AG04450 (cell line): ENCODE measurements at regions of chr7 and their contacts with region 1.

Region 1: DNA sequence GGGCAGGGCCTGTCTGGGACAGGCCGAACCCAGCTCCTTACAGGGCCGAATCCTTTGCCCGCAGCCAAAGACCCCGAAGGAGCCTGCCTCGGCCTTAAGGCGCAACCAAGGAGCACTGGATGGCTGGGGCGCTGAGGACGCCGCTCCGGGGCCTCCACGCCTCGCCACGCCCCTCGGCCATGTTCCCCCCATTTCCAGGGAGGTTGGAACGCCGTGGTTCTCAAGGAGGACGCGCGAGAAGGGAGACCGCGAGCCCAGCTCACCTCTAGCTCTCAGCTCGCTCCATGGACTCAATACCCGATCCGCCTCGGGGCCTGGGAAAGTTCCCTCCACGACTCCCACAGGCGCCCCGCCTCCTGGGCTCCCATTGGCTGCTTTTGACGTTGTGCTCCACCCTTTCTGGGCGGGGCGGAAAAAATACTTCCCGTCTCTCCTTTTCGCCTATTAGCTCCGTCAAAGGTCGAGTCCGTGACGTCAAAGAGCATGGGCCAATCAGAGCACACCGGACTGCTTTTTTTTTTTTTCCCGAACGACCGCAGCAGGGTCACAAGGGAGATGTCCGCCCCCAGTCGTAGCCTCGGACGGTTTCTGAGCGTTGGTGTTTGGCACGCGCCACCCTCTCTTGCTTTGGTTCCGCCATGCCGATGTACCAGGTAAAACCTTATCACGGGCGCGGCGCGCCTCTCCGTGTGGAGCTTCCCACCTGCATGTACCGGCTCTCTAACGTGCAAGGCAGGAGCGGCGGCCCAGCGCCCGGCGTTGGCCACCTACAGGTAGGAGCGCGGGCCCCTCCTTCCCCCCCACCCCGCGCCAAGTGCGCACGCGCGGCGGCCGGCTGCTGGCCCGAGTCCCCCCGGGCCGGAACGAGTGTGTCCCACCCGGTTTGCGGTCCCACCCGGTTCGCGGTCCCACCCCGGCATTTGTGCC is 305.7 kb downstream of the TYW1 start:
- DNase-seq: peak; percentile 98
- H3K4me3 ChIP-seq: peak overlapping the region; percentile 85
- H3K27ac ChIP-seq: peak overlapping the region; percentile 96
- H3K27me3 ChIP-seq: no peaks in the 10 kb centered on the region
- CTCF ChIP-seq: peak; percentile 49

Region 2: DNA sequence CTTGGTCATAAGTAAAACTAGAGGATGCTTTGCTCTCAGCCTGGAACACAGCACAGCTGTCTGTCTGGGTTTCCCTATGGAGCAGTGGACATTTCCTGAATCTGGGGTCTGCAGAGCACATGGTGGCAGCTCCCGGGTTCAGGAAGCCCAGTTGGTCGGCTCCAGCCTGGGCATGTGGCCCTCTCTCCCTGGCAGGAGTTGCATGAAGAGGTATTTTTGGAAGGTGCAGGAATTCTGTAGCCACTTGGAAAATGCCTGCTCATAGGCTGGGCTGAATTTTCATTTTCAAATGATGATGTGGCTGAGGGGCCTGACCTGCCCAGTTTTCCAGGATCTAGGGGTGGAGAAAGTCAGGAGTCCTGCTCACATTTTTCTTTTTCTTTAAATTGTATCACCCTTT is 1103.9 kb before region 1 on chr7:
- CTCF ChIA-PET with region 1: no interaction called
- POLR2A ChIA-PET with region 1: no interaction called
- DNase-seq: no peak
- H3K4me3 ChIP-seq: no peak overlapping the region
- H3K27ac ChIP-seq: no peak overlapping the region
- H3K27me3 ChIP-seq: no peaks in the 10 kb centered on the region
- CTCF ChIP-seq: no peak

Region 3: GRCh38 chr7:67045496-67045995 is 256.8 kb before region 1 on chr7:
- CTCF ChIA-PET with region 1: no interaction called
- POLR2A ChIA-PET with region 1: interaction called, 10 read pairs
- DNase-seq: no peak
- H3K4me3 ChIP-seq: no peak overlapping the region
- H3K27ac ChIP-seq: no peak overlapping the region
- H3K27me3 ChIP-seq: no peaks in the 10 kb centered on the region
- CTCF ChIP-seq: no peak